ENCODE measurements at regions of chr5 and their contacts with region 1.

Region 1: GRCh38 chr5:81068063-81068462 is 107.9 kb downstream of the RASGRF2 start:
- DNase-seq: no peak
- ATAC-seq: no peak

Region 2: DNA sequence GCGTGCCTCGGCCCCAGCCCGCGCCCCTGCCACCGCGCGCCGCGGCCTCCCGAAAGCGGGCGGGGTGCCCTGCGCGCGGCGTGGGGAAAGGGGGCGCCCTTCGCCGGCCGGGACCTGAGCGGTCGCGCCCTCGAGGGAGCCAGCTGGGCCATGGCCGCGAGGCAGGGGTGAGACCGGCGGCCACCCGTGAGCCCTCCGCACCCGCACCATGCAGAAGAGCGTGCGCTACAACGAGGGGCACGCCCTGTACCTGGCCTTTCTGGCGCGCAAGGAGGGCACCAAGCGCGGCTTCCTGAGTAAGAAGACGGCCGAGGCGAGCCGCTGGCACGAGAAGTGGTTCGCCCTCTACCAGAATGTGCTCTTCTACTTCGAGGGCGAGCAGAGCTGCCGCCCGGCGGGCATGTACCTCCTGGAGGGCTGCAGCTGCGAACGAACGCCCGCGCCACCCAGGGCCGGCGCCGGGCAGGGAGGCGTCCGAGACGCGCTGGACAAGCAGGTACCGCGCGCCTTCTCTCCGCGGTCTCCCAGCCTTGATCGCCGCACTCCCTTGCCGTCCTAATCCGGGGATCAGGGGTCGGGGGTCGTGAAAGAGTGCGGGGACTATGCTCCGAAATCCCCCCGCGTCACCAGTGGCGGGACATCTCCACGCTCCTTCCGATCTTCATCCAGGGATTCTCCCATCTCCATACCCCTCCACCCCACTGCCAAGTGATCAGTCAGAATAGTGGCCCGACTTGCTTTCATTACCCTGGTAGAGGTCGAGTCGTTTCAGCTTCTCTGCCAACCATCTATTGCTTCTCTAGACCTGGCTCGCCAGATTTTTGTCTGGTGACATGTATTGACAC is 107.3 kb before region 1 on chr5:
- intact Hi-C with region 1: loop called (anchors 10 kb)
- DNase-seq: peak; percentile 48
- ATAC-seq: peak; percentile 68